HEK293T (cell line): ENCODE measurements at regions of chr5 and their contacts with region 1.

Region 1: GRCh38 chr5:134304311-134304710 is 62.7 kb downstream of the CDKL3 start:
- DNase-seq: no peak

Region 2: GRCh38 chr5:134281081-134281480 is 23.2 kb before region 1 on chr5:
- CTCF ChIA-PET with region 1: no interaction called
- POLR2A ChIA-PET with region 1: no interaction called
- DNase-seq: no peak

Region 3: GRCh38 chr5:134586866-134587524 is 282.7 kb after region 1 on chr5:
- CTCF ChIA-PET with region 1: interaction called, 11 read pairs
- POLR2A ChIA-PET with region 1: no interaction called
- DNase-seq: peak; percentile 83